A549 (cell line): ENCODE measurements at regions of chr17 and their contacts with region 1.

Region 1: GRCh38 chr17:3647769-3648555 is 11.4 kb downstream of the CTNS start:
- DNase-seq: peak; percentile 62 to 80
- ATAC-seq: peak; percentile 90 to 94
- H3K4me3 ChIP-seq: no peak overlapping the region
- H3K27ac ChIP-seq: no peak overlapping the region
- H3K4me1 ChIP-seq: no peaks in the 10 kb centered on the region
- CTCF ChIP-seq: peak; percentile 55
- EP300 ChIP-seq: no peak
- POLR2A ChIP-seq: no peak
- RAD21 ChIP-seq: peak; percentile 45 to 54; a peak in 4 of 5 replicates

Region 2: GRCh38 chr17:3048767-3049471 is 599.0 kb before region 1 on chr17:
- CTCF ChIA-PET with region 1: interaction called, 100 read pairs
- POLR2A ChIA-PET with region 1: interaction called, 7 read pairs
- DNase-seq: peak; percentile 96 to 99
- ATAC-seq: peak; percentile 99
- H3K4me3 ChIP-seq: peak overlapping the region; percentile 58
- H3K27ac ChIP-seq: peak overlapping the region; percentile 74 to 91
- H3K4me1 ChIP-seq: peaks cover 8% of the 10 kb centered on the region; the same call in 1 of the 3 replicates
- CTCF ChIP-seq: peak; percentile 95
- EP300 ChIP-seq: no peak
- POLR2A ChIP-seq: peak; percentile 80
- RAD21 ChIP-seq: peak; percentile 97 to 99

Region 3: DNA sequence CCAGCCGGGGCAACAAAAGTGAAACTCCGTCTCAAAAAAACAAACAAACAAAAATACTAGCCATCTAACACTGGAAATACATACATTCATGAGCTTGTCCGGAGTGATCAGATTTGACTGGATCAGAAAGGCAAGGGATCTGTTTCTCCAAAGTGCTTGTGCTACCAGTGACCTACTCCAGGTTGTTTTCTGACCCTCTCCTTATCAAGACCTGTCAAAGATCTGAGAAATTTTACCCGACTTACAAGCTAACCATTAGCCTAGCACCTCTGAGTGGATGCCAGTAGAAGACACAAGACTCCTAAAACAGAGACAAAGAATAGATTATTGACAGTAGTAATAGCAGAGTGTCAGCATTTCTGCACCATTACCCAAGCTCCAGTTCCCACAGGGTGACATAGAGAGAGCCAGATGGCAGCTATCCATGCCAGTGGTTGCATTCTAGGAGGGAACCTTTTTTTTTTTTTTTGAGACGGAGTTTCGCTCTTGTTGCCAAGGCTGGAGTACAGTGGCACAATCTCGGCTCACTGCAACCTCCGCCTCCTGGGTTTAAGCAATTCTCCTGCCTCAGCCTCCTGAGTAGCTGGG is 162.4 kb before region 1 on chr17:
- CTCF ChIA-PET with region 1: no interaction called
- POLR2A ChIA-PET with region 1: no interaction called
- DNase-seq: no peak
- ATAC-seq: no peak
- H3K4me3 ChIP-seq: no peak overlapping the region
- H3K27ac ChIP-seq: no peak overlapping the region
- H3K4me1 ChIP-seq: no peaks in the 10 kb centered on the region
- CTCF ChIP-seq: no peak
- EP300 ChIP-seq: no peak
- POLR2A ChIP-seq: no peak
- RAD21 ChIP-seq: no peak

Region 4: GRCh38 chr17:3535253-3535995 is 112.5 kb before region 1 on chr17:
- CTCF ChIA-PET with region 1: interaction called, 15 read pairs
- POLR2A ChIA-PET with region 1: no interaction called
- DNase-seq: peak; percentile 89 to 90
- ATAC-seq: peak; percentile 86 to 93
- H3K4me3 ChIP-seq: peak overlapping the region; percentile 38
- H3K27ac ChIP-seq: peak overlapping the region; percentile 66 to 85
- H3K4me1 ChIP-seq: peaks cover 7% of the 10 kb centered on the region; the same call in 1 of the 3 replicates
- CTCF ChIP-seq: peak; percentile 73
- EP300 ChIP-seq: no peak
- POLR2A ChIP-seq: peak; percentile 26
- RAD21 ChIP-seq: peak; percentile 53 to 75

Region 5: DNA sequence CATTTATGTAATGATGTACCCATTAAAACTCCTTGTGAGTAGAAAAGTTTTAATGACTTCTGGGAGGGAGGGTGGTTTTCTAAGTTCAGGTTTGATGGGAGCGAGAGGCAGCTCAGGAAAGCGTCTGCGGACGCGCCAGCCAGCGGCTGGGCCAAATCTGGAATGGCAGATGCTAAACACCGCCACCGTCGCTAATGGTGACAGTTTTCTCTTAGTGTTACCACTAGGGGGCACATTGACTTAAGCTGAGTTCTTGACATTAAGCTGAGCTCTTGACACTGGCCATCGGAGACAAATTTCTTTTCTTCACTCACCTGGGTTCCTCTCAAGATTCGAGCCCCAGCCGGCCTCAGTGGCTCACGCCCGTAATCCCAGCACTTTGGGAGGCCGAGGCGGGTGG is 45.5 kb before region 1 on chr17:
- CTCF ChIA-PET with region 1: interaction called, 17 read pairs
- POLR2A ChIA-PET with region 1: no interaction called
- DNase-seq: peak; percentile 48 to 70
- ATAC-seq: peak in 1 of 2 experiments; percentile 72; a peak in 3 of 6 replicates
- H3K4me3 ChIP-seq: no peak overlapping the region
- H3K27ac ChIP-seq: no peak overlapping the region
- H3K4me1 ChIP-seq: peaks cover 8% of the 10 kb centered on the region; the same call in 1 of the 3 replicates
- CTCF ChIP-seq: peak; percentile 46
- EP300 ChIP-seq: no peak
- POLR2A ChIP-seq: no peak
- RAD21 ChIP-seq: peak; percentile 30 to 53; a peak in 3 of 5 replicates

Region 6: GRCh38 chr17:3626831-3627768 is 20.9 kb before region 1 on chr17:
- CTCF ChIA-PET with region 1: interaction called, 11 read pairs
- POLR2A ChIA-PET with region 1: no interaction called
- DNase-seq: no peak
- ATAC-seq: no peak
- H3K4me3 ChIP-seq: no peak overlapping the region
- H3K27ac ChIP-seq: no peak overlapping the region
- H3K4me1 ChIP-seq: no peaks in the 10 kb centered on the region
- CTCF ChIP-seq: no peak
- EP300 ChIP-seq: no peak
- POLR2A ChIP-seq: no peak
- RAD21 ChIP-seq: no peak

Region 7: GRCh38 chr17:3636154-3636907 is 11.6 kb before region 1 on chr17 and contains the starts of genes CTNS and SHPK:
- CTCF ChIA-PET with region 1: interaction called, 26 read pairs
- POLR2A ChIA-PET with region 1: interaction called, 16 read pairs
- DNase-seq: peak; percentile 97 to 99
- ATAC-seq: peak; percentile 94 to 97
- H3K4me3 ChIP-seq: peak within 1 kb of the TSS; percentile 93
- H3K27ac ChIP-seq: peak within 1 kb of the TSS; percentile 90 to 97
- H3K4me1 ChIP-seq: peaks cover 14% of the 10 kb centered on the region
- CTCF ChIP-seq: no peak
- EP300 ChIP-seq: no peak
- POLR2A ChIP-seq: peak; percentile 93
- RAD21 ChIP-seq: no peak
- polyA plus RNA-seq, gene CTNS: 6.5 and 7.4 TPM in 2 replicates
- polyA plus RNA-seq, gene SHPK: 10.7 and 13.4 TPM in 2 replicates

Region 8: DNA sequence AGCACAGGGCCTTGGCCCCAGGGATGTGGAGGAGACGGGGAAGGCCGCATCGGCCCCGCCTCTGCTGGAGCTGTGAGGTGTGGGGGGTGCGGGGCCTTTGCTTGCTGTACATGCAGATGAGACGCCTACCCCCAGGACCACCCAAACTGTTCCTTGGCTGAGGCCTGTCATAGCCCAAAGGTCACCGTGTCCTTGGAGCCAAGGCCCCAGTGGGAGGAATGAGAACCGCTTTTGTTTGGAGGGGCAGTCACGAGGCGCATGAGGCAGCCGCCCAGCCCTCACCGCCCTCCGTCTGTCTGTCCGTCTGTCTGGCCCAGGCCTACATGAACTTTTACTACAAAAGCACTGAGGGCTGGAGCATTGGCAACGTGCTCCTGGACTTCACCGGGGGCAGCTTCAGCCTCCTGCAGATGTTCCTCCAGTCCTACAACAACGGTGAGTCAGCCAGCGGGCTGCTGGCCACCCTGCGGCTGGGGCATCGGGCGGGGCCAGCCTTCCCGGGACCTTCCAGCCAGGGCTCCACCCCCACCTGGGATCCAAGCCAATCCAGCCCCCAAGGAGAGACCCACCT is 11.7 kb after region 1 on chr17:
- CTCF ChIA-PET with region 1: interaction called, 43 read pairs
- POLR2A ChIA-PET with region 1: no interaction called
- DNase-seq: peak; percentile 61 to 80
- ATAC-seq: peak; percentile 51 to 68
- H3K4me3 ChIP-seq: no peak overlapping the region
- H3K27ac ChIP-seq: peak overlapping the region; percentile 42 to 80
- H3K4me1 ChIP-seq: peaks cover 15% of the 10 kb centered on the region
- CTCF ChIP-seq: no peak
- EP300 ChIP-seq: no peak
- POLR2A ChIP-seq: no peak
- RAD21 ChIP-seq: no peak

Region 9: GRCh38 chr17:3754458-3755334 is 106.7 kb after region 1 on chr17:
- CTCF ChIA-PET with region 1: no interaction called
- POLR2A ChIA-PET with region 1: no interaction called
- DNase-seq: peak in 1 of 2 experiments; percentile 58
- ATAC-seq: peak; percentile 54 to 75
- H3K4me3 ChIP-seq: peak overlapping the region; percentile 36
- H3K27ac ChIP-seq: peak overlapping the region in 1 of 2 experiments; percentile 45; a peak in 2 of 6 replicates
- H3K4me1 ChIP-seq: peaks cover 9% of the 10 kb centered on the region; the same call in 1 of the 3 replicates
- CTCF ChIP-seq: no peak
- EP300 ChIP-seq: no peak
- POLR2A ChIP-seq: no peak
- RAD21 ChIP-seq: no peak